Left colon (tissue), 2 donors: ENCODE measurements at regions of chr17 and their contacts with region 1.

Region 1: DNA sequence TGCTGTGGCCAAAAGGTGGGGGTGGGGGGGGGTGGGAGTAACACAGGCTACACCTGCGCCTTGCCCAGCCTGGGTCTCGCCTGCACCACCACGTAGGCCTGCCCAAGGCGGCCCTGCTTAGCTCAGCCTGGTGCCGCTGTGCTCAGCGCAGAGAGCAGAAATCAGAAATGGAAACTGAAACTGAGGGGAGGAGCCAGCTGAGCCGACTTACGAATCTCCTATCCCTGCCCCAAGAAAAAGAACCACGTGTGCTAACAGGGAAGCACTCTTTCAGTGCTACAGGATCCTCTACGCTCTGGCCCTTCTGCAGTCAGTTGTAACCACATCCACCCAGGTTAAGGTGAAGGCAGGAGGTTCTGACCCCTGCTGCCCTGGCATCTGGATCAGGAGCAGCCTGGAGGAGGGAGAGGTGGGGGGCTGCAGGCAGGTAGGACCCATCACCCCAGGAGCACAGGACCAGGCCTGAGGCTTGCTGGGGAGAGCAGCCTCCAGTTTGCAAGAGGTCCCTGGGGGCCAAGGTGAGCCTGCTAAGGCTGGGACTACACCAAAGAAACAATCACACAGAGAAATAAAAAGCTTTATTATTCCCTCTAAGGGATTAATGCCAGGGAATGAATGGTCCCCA is at the start of gene DHX58:
- DNase-seq: peak; percentile 83 to 84
- ATAC-seq: peak; percentile 84
- total RNA-seq, gene DHX58: 10.8 to 12.3 TPM

Region 2: DNA sequence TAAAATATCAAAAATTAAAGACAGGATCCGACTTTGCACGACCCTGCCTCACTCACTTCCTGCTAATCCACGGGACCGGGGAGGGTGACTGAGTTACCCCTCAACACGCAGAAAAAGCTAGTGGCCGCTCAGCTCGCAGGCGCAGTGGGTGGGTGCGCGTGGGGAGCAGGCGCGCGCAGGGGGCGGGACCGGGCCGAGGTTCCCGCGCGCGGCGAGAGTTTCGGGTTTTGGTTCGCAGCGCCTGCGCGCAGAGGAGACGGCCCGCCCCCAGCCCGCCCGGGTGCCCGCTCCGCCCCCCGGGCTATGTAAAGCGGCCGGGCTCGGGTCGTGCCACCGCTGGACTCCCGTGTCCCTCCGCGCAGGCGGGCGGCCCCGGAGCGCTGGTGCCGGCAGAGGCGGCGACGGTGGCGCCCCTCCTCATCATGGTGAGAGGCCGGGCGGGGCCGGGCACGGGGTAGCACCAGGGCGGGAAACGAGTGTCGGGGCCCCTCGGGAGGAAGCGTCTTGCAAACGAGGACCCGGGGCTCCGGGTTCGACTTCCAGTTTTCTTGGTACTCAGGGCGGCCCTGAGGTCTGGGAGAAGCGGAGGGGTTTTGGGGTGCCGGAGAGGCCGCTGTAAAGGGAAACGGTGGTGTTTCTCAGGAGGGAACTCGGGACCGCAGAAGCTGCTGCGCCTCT is 146.1 kb before region 1 on chr17 and contains the start of gene CNP:
- intact Hi-C with region 1: loop called in 1 of 2 experiments (anchors 10 kb)
- DNase-seq: peak; percentile 89 to 95
- ATAC-seq: peak; percentile 88
- total RNA-seq, gene CNP: 45.6 to 53.6 TPM

Region 3: GRCh38 chr17:42027961-42028790 is 84.5 kb before region 1 on chr17:
- intact Hi-C with region 1: loop called in 1 of 2 experiments (anchors 5 kb)
- DNase-seq: no peak
- ATAC-seq: peak; percentile 27

Region 4: GRCh38 chr17:42050393-42051012 is 62.2 kb before region 1 on chr17 and contains the start of gene C17orf113:
- intact Hi-C with region 1: loop called in 1 of 2 experiments (anchors 10 kb)
- DNase-seq: peak; percentile 36 to 73
- ATAC-seq: peak; percentile 89
- total RNA-seq, gene C17orf113: 1.8 to 2.5 TPM